Posterior vena cava (tissue), 2 donors: ENCODE measurements at regions of chr12 and their contacts with region 1.

Region 1: GRCh38 chr12:11071414-11071813 is 9.3 kb upstream of the TAS2R46 start:
- DNase-seq: no peak

Region 2: GRCh38 chr12:11015775-11016430 is 55.5 kb before region 1 on chr12:
- intact Hi-C with region 1: loop called in 1 of 2 experiments (anchors 5 kb)
- DNase-seq: no peak